B cell (primary cell): ENCODE measurements at regions of chr2 and their contacts with region 1.

Region 1: GRCh38 chr2:236512902-236513435 is 56.7 kb upstream of the ACKR3 start:
- DNase-seq: peak; percentile 80
- ATAC-seq: peak; percentile 96
- H3K4me3 ChIP-seq: no peak overlapping the region
- H3K4me3 Mint-ChIP-seq: no peak overlapping the region
- H3K27ac ChIP-seq: no peak overlapping the region
- H3K27ac Mint-ChIP-seq: no peak overlapping the region
- H3K4me1 ChIP-seq: peaks cover 13 to 15% of the 10 kb centered on the region in 2 donors
- H3K4me1 Mint-ChIP-seq: peaks cover 10% of the 10 kb centered on the region
- H3K27me3 ChIP-seq: peaks cover 0 to 11% (median 3%) of the 10 kb centered on the region in 4 experiments
- H3K27me3 Mint-ChIP-seq: peaks cover 16% of the 10 kb centered on the region
- CTCF ChIP-seq: peak; percentile 84

Region 2: GRCh38 chr2:236459393-236459792 is 53.6 kb before region 1 on chr2:
- CTCF ChIA-PET with region 1: no interaction called
- POLR2A ChIA-PET with region 1: no interaction called
- intact Hi-C with region 1: no loop called
- DNase-seq: no peak
- ATAC-seq: no peak
- H3K4me3 ChIP-seq: no peak overlapping the region
- H3K4me3 Mint-ChIP-seq: no peak overlapping the region
- H3K27ac ChIP-seq: no peak overlapping the region
- H3K27ac Mint-ChIP-seq: no peak overlapping the region
- H3K4me1 ChIP-seq: no peaks in the 10 kb centered on the region
- H3K4me1 Mint-ChIP-seq: no peaks in the 10 kb centered on the region
- H3K27me3 ChIP-seq: no peaks in the 10 kb centered on the region
- H3K27me3 Mint-ChIP-seq: peaks cover 2% of the 10 kb centered on the region
- CTCF ChIP-seq: no peak

Region 3: DNA sequence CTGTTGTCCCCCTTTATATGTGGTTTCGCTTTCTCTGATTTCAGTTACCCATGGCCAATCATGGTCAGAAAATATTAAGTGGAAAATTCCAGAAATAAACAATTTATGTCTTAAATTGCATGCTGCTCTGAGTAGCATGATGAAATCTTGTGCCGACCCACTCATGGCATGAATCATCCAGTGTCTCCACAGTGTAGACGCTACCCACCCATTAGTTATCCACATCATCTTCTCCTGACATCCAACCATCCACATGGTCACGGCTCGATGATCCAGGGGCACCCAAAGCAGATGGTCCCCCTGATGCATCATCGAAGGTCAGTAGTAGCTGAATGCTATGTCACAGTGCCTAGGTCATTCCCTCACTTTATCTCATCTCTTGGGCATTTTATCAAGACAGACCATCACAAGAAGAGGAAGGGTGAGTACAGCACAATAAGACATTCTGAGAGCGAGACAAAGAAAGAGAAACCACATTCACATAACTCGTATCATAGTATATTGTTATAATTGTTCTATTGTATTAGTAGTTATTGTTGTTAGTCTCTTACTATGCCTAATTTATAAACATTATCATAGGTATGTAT is 12.5 kb after region 1 on chr2:
- CTCF ChIA-PET with region 1: interaction called, 11 read pairs
- POLR2A ChIA-PET with region 1: no interaction called
- intact Hi-C with region 1: no loop called
- DNase-seq: no peak
- ATAC-seq: no peak
- H3K4me3 ChIP-seq: no peak overlapping the region
- H3K4me3 Mint-ChIP-seq: no peak overlapping the region
- H3K27ac ChIP-seq: no peak overlapping the region
- H3K27ac Mint-ChIP-seq: no peak overlapping the region
- H3K4me1 ChIP-seq: no peaks in the 10 kb centered on the region
- H3K4me1 Mint-ChIP-seq: no peaks in the 10 kb centered on the region
- H3K27me3 ChIP-seq: peaks cover 0 to 2% (median under 1%) of the 10 kb centered on the region in 4 experiments
- H3K27me3 Mint-ChIP-seq: peaks cover 13% of the 10 kb centered on the region
- CTCF ChIP-seq: no peak

Region 4: GRCh38 chr2:236545814-236546480 is 33.0 kb after region 1 on chr2:
- CTCF ChIA-PET with region 1: interaction called, 36 read pairs
- POLR2A ChIA-PET with region 1: interaction called, 3 read pairs
- intact Hi-C with region 1: loop called (anchors 1 kb)
- DNase-seq: peak; percentile 79
- ATAC-seq: peak; percentile 69
- H3K4me3 ChIP-seq: peak overlapping the region in 4 of 5 experiments; percentile 14 to 63 (median 36)
- H3K4me3 Mint-ChIP-seq: peak overlapping the region; percentile 82
- H3K27ac ChIP-seq: peak overlapping the region; percentile 88
- H3K27ac Mint-ChIP-seq: peak overlapping the region; percentile 99
- H3K4me1 ChIP-seq: peaks cover 66 to 69% of the 10 kb centered on the region in 2 donors
- H3K4me1 Mint-ChIP-seq: peaks cover 78% of the 10 kb centered on the region
- H3K27me3 ChIP-seq: no peaks in the 10 kb centered on the region
- H3K27me3 Mint-ChIP-seq: no peaks in the 10 kb centered on the region
- CTCF ChIP-seq: no peak

Region 5: GRCh38 chr2:237026981-237027711 is 514.2 kb after region 1 on chr2:
- CTCF ChIA-PET with region 1: interaction called, 14 read pairs
- POLR2A ChIA-PET with region 1: no interaction called
- intact Hi-C with region 1: no loop called
- DNase-seq: peak; percentile 35
- ATAC-seq: no peak
- H3K4me3 ChIP-seq: no peak overlapping the region
- H3K4me3 Mint-ChIP-seq: no peak overlapping the region
- H3K27ac ChIP-seq: no peak overlapping the region
- H3K27ac Mint-ChIP-seq: no peak overlapping the region
- H3K4me1 ChIP-seq: no peaks in the 10 kb centered on the region
- H3K4me1 Mint-ChIP-seq: no peaks in the 10 kb centered on the region
- H3K27me3 ChIP-seq: peaks cover 0 to 5% (median 0%) of the 10 kb centered on the region in 4 experiments
- H3K27me3 Mint-ChIP-seq: peaks cover 12% of the 10 kb centered on the region
- CTCF ChIP-seq: peak; percentile 60

Region 6: DNA sequence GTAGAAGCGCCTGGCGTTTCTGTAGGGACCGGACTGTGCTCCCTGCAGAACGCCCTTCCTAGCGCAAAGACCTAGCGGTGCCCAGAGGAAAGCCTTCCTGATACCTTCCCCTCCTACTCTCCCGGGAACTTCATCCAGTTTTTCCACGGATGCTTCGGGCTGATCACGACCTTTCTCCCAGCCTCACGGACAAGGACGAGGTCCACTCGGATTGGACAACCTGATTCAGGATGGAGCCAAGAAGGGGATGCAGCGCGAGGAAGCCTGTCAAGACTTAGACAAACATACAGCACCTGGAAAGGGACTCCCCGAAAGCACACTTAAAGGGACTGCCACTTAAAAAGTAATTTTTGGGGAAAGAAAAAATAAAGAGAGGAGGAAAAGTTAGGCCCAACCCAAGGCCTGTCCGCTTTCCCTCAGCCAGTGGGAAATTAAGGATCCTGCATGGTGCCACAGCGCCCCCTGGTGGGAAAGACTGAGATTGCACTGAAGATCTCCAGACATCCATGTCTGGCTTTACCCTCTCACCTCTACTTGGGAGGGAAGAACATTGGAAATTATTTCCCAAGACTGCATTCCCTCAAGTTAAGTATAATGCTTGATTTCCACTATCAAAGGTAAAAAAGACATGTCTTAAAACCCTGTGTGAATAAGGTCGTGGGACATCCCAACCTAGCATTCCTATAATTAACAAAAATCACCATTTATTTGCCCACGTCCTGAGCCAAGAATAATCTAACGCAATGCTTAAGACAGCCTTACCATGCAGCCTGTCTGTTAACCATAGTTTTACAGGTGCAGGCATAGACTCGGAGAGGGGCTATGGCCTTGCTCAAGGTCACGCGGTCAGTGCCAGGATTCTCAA is 559.3 kb after region 1 on chr2:
- CTCF ChIA-PET with region 1: interaction called, 4 read pairs
- POLR2A ChIA-PET with region 1: no interaction called
- intact Hi-C with region 1: loop called (anchors 5 kb)
- DNase-seq: peak; percentile 70
- ATAC-seq: peak; percentile 47
- H3K4me3 ChIP-seq: no peak overlapping the region
- H3K4me3 Mint-ChIP-seq: no peak overlapping the region
- H3K27ac ChIP-seq: no peak overlapping the region
- H3K27ac Mint-ChIP-seq: no peak overlapping the region
- H3K4me1 ChIP-seq: no peaks in the 10 kb centered on the region
- H3K4me1 Mint-ChIP-seq: no peaks in the 10 kb centered on the region
- H3K27me3 ChIP-seq: no peaks in the 10 kb centered on the region
- H3K27me3 Mint-ChIP-seq: no peaks in the 10 kb centered on the region
- CTCF ChIP-seq: peak; percentile 99